B cell (primary cell): ENCODE measurements at regions of chr2 and their contacts with region 1.

Region 1: DNA sequence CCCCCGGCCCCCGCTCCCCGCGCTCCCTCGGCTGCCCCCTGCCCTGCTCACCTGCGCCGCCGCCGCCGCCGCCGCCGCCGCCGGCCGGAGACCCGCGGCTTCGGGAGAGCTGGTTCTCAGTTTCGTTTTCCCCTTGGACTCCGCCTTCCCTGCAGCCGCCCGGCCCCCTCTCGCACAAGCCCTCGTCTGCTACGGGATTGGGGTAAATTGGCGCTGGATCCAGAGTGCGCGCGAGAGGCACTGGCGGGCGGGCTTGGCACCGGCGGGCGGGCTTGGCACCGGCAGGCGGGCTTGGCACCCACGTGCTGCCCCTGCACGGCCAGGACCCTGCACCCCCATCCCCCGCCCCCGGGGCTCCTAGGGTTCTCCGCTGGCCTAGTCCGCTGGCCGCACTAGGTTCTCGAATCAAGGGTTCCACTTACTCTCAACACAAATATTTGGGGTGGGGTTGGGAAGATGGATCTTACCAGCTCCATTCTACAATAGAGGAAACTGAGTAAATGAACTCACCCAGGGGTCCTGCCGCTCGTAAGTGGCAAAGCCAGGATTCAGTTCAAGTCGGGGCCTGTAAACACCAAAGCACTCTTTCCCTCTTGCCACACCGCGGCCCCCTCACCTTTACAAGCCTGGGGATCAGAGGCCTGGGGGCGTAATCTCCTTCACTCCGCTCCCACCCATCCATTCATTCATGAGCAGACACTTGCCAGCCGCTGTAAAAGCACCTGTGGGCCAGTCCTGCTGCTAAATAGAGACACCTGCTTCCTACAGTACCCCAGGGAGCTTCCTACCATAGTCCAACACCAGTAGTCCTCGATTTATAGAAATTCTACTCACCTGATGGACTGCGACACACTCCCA is at the start of gene EIF2AK2:
- DNase-seq: peak; percentile 86
- ATAC-seq: peak; percentile 92
- H3K4me3 ChIP-seq: peak within 1 kb of the TSS; percentile 78 to 93 (median 80)
- H3K4me3 Mint-ChIP-seq: peak within 1 kb of the TSS; percentile 96
- H3K27ac ChIP-seq: peak within 1 kb of the TSS; percentile 58 to 72
- H3K27ac Mint-ChIP-seq: peak within 1 kb of the TSS; percentile 93
- H3K4me1 ChIP-seq: peaks cover 26 to 30% of the 10 kb centered on the region in 2 donors
- H3K4me1 Mint-ChIP-seq: peaks cover 40% of the 10 kb centered on the region
- H3K27me3 ChIP-seq: no peaks in the 10 kb centered on the region
- H3K27me3 Mint-ChIP-seq: no peaks in the 10 kb centered on the region
- CTCF ChIP-seq: no peak
- total RNA-seq, gene EIF2AK2: 36.2 and 36.9 TPM in 2 replicates

Region 2: DNA sequence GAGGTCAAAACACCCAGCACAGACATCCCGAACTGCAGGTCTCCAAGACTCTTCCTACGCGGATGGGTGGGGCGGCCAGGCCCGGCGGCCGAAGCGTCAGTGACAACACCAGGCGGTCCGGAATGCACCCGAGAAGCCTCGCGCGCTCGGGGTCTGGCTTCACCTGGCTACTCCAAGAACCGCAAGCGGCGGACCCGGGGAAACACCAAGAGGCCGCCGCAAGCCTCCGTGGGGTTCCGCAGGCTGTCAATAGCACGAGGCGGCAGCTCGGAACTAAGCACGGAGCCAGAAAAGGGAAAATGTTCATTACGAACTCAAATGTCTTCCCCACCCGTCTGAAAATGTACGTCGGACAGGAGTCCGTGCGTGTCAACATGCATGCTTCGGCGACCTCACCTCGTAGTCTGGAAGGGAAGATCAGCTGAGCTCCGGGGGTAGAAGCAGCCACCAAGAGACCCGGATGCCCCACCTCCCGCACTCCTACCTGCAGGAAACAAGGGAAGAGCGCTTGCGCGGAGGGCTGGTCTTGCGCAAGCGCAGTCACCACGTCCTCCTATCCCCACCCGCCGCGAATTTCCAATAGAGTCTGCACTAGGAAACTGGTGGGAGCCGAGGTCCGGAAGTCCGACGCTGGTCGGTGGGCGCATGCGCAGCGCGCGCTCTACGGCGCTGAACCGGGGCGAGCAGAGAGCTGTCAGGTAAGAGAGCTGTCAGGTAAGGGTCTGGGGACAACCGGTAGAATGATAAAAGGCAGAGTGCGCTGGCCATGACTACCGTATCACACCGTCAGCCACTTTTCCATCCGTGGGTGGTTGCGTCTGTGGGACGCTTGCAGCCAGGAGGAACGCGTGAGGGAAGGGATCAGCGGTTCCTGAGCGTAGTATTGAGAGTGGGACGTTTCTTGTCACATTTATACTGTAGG is 73.0 kb before region 1 on chr2 and contains the starts of genes GPATCH11 and HEATR5B:
- CTCF ChIA-PET with region 1: no interaction called
- POLR2A ChIA-PET with region 1: interaction called, 4 read pairs
- intact Hi-C with region 1: loop called (anchors 2 kb)
- DNase-seq: peak; percentile 94
- ATAC-seq: peak; percentile 81
- H3K4me3 ChIP-seq: peak within 1 kb of the TSS; percentile 75 to 93 (median 89)
- H3K4me3 Mint-ChIP-seq: peak within 1 kb of the TSS; percentile 76
- H3K27ac ChIP-seq: peak within 1 kb of the TSS; percentile 69 to 91
- H3K27ac Mint-ChIP-seq: peak within 1 kb of the TSS; percentile 84
- H3K4me1 ChIP-seq: peaks cover 67 to 73% of the 10 kb centered on the region in 2 donors
- H3K4me1 Mint-ChIP-seq: peaks cover 61% of the 10 kb centered on the region
- H3K27me3 ChIP-seq: no peaks in the 10 kb centered on the region
- H3K27me3 Mint-ChIP-seq: no peaks in the 10 kb centered on the region
- CTCF ChIP-seq: no peak
- total RNA-seq, gene GPATCH11: 18.2 and 20.2 TPM in 2 replicates
- total RNA-seq, gene HEATR5B: 44.3 and 50.0 TPM in 2 replicates

Region 3: GRCh38 chr2:37168217-37168981 is 11.3 kb after region 1 on chr2:
- CTCF ChIA-PET with region 1: interaction called, 27 read pairs
- POLR2A ChIA-PET with region 1: no interaction called
- intact Hi-C with region 1: no loop called
- DNase-seq: peak; percentile 59
- ATAC-seq: peak; percentile 64
- H3K4me3 ChIP-seq: no peak overlapping the region
- H3K4me3 Mint-ChIP-seq: no peak overlapping the region
- H3K27ac ChIP-seq: no peak overlapping the region
- H3K27ac Mint-ChIP-seq: no peak overlapping the region
- H3K4me1 ChIP-seq: no peaks in the 10 kb centered on the region
- H3K4me1 Mint-ChIP-seq: peaks cover 2% of the 10 kb centered on the region
- H3K27me3 ChIP-seq: no peaks in the 10 kb centered on the region
- H3K27me3 Mint-ChIP-seq: no peaks in the 10 kb centered on the region
- CTCF ChIP-seq: peak; percentile 83

Region 4: DNA sequence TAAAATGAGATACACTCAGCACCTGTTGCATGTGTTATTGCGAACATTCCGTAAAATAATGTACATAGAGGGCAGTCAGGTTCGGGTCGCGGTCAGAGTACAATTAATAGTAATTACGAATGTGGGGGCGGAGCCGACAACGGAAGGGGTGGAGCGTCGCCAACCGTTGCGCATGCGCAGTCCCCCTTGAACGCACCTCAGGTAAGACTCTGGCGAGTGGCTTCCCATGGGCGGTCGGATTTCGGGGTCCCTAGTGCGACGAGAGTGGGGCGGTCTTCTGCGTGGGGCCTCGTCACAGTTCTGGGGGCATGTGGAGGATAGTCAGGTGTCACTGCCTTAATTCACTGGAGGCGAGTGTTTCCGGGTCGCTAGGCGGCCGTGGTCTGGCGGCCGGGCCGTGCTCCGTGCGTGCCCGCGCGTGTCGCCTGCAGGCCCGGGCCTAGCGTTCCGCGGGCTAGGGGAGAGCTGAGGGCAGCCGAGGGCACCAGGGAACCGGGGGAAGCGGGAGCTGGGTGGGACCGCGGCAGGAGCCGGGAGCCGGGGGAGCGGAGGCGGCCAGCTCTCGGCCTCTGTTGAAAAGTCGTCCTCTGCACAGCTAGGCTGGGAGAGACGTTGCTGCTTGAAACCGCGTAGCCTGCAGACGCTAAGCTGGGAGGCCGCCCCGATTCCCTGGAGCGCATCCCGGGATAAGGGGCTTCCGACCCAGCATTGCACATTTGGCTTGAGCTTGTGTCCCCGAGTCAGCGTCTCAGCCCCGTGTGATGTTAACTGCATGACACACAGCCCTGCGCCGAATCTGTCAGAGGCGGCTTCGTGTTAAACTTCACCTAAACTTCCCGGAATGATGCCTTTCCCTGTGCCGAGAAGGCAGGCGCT is 39.5 kb after region 1 on chr2 and contains the start of gene CEBPZOS:
- CTCF ChIA-PET with region 1: no interaction called
- POLR2A ChIA-PET with region 1: no interaction called
- intact Hi-C with region 1: loop called (anchors 5 kb)
- DNase-seq: peak; percentile 94
- ATAC-seq: peak; percentile 89
- H3K4me3 ChIP-seq: peak within 1 kb of the TSS; percentile 70 to 87 (median 80)
- H3K4me3 Mint-ChIP-seq: peak within 1 kb of the TSS; percentile 98
- H3K27ac ChIP-seq: peak within 1 kb of the TSS; percentile 78 to 81
- H3K27ac Mint-ChIP-seq: peak within 1 kb of the TSS; percentile 99
- H3K4me1 ChIP-seq: peaks cover 16 to 24% of the 10 kb centered on the region in 2 donors
- H3K4me1 Mint-ChIP-seq: peaks cover 22% of the 10 kb centered on the region
- H3K27me3 ChIP-seq: no peaks in the 10 kb centered on the region
- H3K27me3 Mint-ChIP-seq: no peaks in the 10 kb centered on the region
- CTCF ChIP-seq: no peak
- total RNA-seq, gene CEBPZOS: 36.7 and 38.0 TPM in 2 replicates

Region 5: DNA sequence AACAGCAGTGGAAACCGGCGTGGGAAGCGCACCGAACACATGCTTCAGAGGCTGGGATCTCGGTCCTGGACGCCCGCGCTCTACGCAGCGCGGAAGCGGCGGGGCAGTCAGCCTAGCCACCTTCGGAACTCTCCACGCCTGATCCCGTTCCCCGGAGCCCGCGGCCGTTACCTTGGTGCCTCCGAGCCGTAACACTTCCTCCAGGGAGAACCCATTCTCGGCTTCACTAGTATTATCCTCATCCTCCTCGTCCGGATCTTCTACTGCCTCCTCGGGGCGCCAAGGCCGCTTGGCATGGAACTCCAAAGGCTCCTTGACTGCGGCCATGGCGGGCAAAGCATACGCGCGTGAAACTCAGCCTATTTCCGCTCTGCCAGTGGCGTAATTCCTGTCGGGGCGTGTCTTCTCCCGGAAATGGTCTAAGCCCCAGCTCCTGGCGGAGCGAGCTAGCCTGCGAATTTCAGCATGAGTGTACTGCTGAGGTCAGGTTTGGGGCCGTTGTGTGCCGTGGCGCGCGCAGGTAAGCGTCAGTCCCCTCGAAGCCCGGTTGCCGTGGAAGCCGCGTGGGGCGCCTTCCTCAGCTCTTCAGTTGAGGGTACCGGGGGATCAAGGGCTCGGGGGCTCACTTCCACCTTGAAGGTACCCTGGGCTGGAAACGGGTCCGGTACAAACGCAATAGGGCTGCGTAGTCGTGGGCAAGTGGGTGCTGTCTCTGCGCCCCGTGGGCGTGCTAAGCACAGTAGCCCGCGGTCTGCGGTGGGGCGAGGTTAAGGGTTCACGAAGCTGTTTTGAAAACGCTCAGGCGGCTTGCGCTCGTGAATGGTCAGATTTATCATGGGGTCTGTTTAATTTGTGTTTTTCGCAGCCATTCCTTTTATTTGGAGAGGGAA is 74.4 kb after region 1 on chr2 and contains the starts of genes CEBPZ and NDUFAF7:
- CTCF ChIA-PET with region 1: no interaction called
- POLR2A ChIA-PET with region 1: no interaction called
- intact Hi-C with region 1: loop called (anchors 2 kb)
- DNase-seq: peak; percentile 90
- ATAC-seq: peak; percentile 92
- H3K4me3 ChIP-seq: peak within 1 kb of the TSS; percentile 76 to 95 (median 91)
- H3K4me3 Mint-ChIP-seq: no peak within 1 kb of the TSS
- H3K27ac ChIP-seq: peak within 1 kb of the TSS; percentile 85 to 90
- H3K27ac Mint-ChIP-seq: no peak within 1 kb of the TSS
- H3K4me1 ChIP-seq: peaks cover 26 to 28% of the 10 kb centered on the region in 2 donors
- H3K4me1 Mint-ChIP-seq: peaks cover 18% of the 10 kb centered on the region
- H3K27me3 ChIP-seq: no peaks in the 10 kb centered on the region
- H3K27me3 Mint-ChIP-seq: no peaks in the 10 kb centered on the region
- CTCF ChIP-seq: no peak
- total RNA-seq, gene CEBPZ: 43.9 and 56.5 TPM in 2 replicates
- total RNA-seq, gene NDUFAF7: 35.4 and 42.0 TPM in 2 replicates

Region 6: DNA sequence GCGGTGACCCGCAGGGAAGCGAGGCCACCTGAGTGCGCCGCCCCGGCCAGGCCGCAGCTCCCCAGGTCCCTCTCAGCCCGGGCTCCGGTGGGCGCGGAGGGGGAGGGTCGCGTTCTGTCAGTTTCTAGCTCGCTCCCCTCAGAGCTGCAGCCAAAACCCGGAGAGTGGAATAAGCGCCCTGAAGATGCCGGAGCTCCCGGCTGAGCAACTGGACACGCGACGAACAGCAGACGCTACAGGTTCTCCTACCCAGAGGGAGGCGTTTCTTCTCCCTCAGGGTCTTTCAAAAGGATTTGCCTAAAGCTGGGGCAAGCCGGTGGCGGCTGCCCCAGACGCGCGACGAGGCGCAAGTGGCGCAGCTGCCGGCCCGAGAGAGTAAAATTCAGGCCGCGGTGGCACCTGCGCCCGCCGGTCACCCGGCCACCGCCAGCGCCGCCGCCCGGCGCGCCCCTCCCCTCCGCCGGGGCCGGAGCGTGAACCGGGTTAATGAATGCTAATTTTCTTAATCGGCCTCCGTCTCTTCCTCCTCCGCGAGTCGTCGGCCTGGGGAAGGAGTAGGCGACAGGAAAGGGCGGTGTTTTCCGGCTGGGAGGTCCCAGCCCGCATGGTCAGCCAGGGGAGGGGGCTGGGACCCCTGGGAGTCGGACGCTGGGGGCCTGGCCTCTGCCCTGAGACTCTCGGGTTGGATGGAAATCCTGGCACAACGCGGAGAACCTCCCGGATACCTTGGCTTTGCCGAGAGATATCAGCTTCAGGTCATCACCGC is 515.2 kb after region 1 on chr2:
- CTCF ChIA-PET with region 1: no interaction called
- POLR2A ChIA-PET with region 1: no interaction called
- intact Hi-C with region 1: loop called (anchors 5 kb)
- DNase-seq: peak; percentile 86
- ATAC-seq: peak; percentile 48
- H3K4me3 ChIP-seq: peak overlapping the region; percentile 44 to 92 (median 84)
- H3K4me3 Mint-ChIP-seq: peak overlapping the region; percentile 98
- H3K27ac ChIP-seq: peak overlapping the region; percentile 81 to 83
- H3K27ac Mint-ChIP-seq: peak overlapping the region; percentile 95
- H3K4me1 ChIP-seq: peaks cover 31 to 38% of the 10 kb centered on the region in 2 donors
- H3K4me1 Mint-ChIP-seq: peaks cover 52% of the 10 kb centered on the region
- H3K27me3 ChIP-seq: no peaks in the 10 kb centered on the region
- H3K27me3 Mint-ChIP-seq: no peaks in the 10 kb centered on the region
- CTCF ChIP-seq: no peak